ENCODE measurements at regions of chr10 and their contacts with region 1.

Region 1: GRCh38 chr10:12337453-12338372 is 11.6 kb upstream of the CAMK1D start:
- DNase-seq: no peak
- ATAC-seq: no peak
- H3K4me3 ChIP-seq: no peak overlapping the region
- H3K4me3 Mint-ChIP-seq: no peak overlapping the region
- H3K27ac ChIP-seq: no peak overlapping the region
- H3K27ac Mint-ChIP-seq: no peak overlapping the region
- H3K4me1 ChIP-seq: peaks cover 2 to 10% of the 10 kb centered on the region in 2 experiments
- H3K4me1 Mint-ChIP-seq: peaks cover 10 to 26% (median 16%) of the 10 kb centered on the region in 3 donors
- H3K27me3 ChIP-seq: no peaks in the 10 kb centered on the region
- H3K27me3 Mint-ChIP-seq: no peaks in the 10 kb centered on the region

Region 2: DNA sequence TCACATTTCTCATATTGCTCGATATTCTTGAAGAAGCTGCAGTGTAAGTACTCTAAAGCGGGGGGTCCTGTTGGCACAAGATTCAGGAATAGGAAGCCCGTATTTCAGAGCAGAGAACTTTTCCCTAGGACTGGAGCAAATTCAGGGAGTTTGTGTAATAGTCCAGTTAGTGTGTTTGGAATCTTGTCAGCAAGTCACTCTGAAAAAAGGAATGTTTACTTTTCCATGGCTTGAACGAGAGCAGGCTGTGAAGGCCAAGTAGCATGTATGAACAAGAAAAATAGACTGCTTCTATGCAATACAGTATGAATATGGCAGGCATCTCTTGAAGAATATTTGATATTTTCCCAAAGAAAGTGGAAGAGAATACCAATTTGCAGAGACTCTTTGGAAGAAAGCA is 101.9 kb before region 1 on chr10:
- CTCF ChIA-PET with region 1: no interaction called
- POLR2A ChIA-PET with region 1: no interaction called
- DNase-seq: no peak
- ATAC-seq: no peak
- H3K4me3 ChIP-seq: no peak overlapping the region
- H3K4me3 Mint-ChIP-seq: no peak overlapping the region
- H3K27ac ChIP-seq: no peak overlapping the region
- H3K27ac Mint-ChIP-seq: no peak overlapping the region
- H3K4me1 ChIP-seq: no peaks in the 10 kb centered on the region
- H3K4me1 Mint-ChIP-seq: peaks cover 3 to 11% (median 8%) of the 10 kb centered on the region in 3 donors
- H3K27me3 ChIP-seq: no peaks in the 10 kb centered on the region
- H3K27me3 Mint-ChIP-seq: no peaks in the 10 kb centered on the region

Region 3: GRCh38 chr10:12308057-12308456 is 29.7 kb before region 1 on chr10:
- CTCF ChIA-PET with region 1: no interaction called
- POLR2A ChIA-PET with region 1: no interaction called
- DNase-seq: no peak
- ATAC-seq: no peak
- H3K4me3 ChIP-seq: no peak overlapping the region
- H3K4me3 Mint-ChIP-seq: no peak overlapping the region
- H3K27ac ChIP-seq: no peak overlapping the region
- H3K27ac Mint-ChIP-seq: no peak overlapping the region
- H3K4me1 ChIP-seq: no peaks in the 10 kb centered on the region
- H3K4me1 Mint-ChIP-seq: peaks cover 0 to 3% (median 0%) of the 10 kb centered on the region in 3 donors
- H3K27me3 ChIP-seq: no peaks in the 10 kb centered on the region
- H3K27me3 Mint-ChIP-seq: no peaks in the 10 kb centered on the region

Region 4: GRCh38 chr10:12348870-12349628 is 11.3 kb after region 1 on chr10 and contains the start of gene CAMK1D:
- CTCF ChIA-PET with region 1: no interaction called
- POLR2A ChIA-PET with region 1: interaction called in 1 of 2 experiments, 11 read pairs
- DNase-seq: peak; percentile 81 to 95 (median 90)
- ATAC-seq: peak; percentile 71 to 77 (median 74)
- H3K4me3 ChIP-seq: peak within 1 kb of the TSS; percentile 92 to 94
- H3K4me3 Mint-ChIP-seq: peak within 1 kb of the TSS; percentile 96 to 97 (median 97)
- H3K27ac ChIP-seq: peak within 1 kb of the TSS; percentile 73
- H3K27ac Mint-ChIP-seq: peak within 1 kb of the TSS; percentile 96 to 97
- H3K4me1 ChIP-seq: peaks cover 15 to 24% of the 10 kb centered on the region in 2 experiments
- H3K4me1 Mint-ChIP-seq: peaks cover 43 to 49% (median 46%) of the 10 kb centered on the region in 3 donors
- H3K27me3 ChIP-seq: no peaks in the 10 kb centered on the region
- H3K27me3 Mint-ChIP-seq: no peaks in the 10 kb centered on the region
- total RNA-seq, gene CAMK1D: 16.8 to 31.3 (median 23.6) TPM

Region 5: DNA sequence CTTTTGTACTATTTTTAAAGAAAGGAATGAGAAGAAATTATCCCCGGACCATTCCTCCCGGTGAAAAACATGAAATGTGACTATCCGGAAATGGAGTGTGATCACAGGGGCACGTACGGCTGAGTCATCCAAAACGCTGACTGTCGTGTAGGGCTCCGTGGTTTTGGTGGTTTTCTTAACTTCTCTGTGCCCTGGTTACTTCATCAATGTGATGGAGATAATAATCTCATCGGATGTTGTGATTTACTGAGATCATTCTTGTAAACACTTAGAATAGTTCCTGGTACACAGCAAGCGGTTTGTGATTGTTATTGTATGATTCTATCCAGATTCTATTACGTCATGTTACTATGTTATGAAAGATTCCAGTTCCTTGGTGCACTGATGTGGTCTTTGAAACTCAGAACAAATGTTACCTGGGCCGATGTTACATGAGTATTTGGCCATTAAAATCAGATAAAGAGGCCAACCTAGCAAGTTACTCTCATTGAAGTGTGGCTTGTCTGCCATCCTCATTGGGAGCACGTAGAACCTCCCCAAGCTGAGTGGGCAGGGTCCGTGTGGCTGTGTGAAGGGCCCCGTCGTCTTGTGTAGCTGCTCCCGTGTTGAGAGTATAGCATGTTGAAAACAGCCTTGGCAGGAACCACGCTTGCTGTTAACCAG is 111.1 kb after region 1 on chr10:
- CTCF ChIA-PET with region 1: no interaction called
- POLR2A ChIA-PET with region 1: no interaction called
- DNase-seq: peak; percentile 18 to 94 (median 75)
- ATAC-seq: peak; percentile 93 to 94 (median 93)
- H3K4me3 ChIP-seq: peak overlapping the region in 1 of 2 donors; percentile 19
- H3K4me3 Mint-ChIP-seq: peak overlapping the region; percentile 45 to 61 (median 55)
- H3K27ac ChIP-seq: peak overlapping the region; percentile 74
- H3K27ac Mint-ChIP-seq: peak overlapping the region; percentile 87 to 96
- H3K4me1 ChIP-seq: peaks cover 3 to 22% of the 10 kb centered on the region in 2 experiments
- H3K4me1 Mint-ChIP-seq: peaks cover 33 to 59% (median 51%) of the 10 kb centered on the region in 3 donors
- H3K27me3 ChIP-seq: peaks cover 0 to 4% of the 10 kb centered on the region in 2 experiments
- H3K27me3 Mint-ChIP-seq: no peaks in the 10 kb centered on the region